ENCODE measurements at regions of chr2 and their contacts with region 1.

Region 1: GRCh38 chr2:99559075-99559662 is 69.4 kb upstream of the REV1 start:
- DNase-seq: peak; percentile 88 to 97
- ATAC-seq: peak; percentile 96
- H3K4me3 ChIP-seq: no peak overlapping the region
- H3K27ac ChIP-seq: no peak overlapping the region
- H3K4me1 ChIP-seq: no peaks in the 10 kb centered on the region
- H3K27me3 ChIP-seq: no peaks in the 10 kb centered on the region

Region 2: GRCh38 chr2:100013892-100014677 is 454.9 kb after region 1 on chr2:
- intact Hi-C with region 1: no loop called
- DNase-seq: peak; percentile 65 to 80
- ATAC-seq: peak; percentile 27
- H3K4me3 ChIP-seq: no peak overlapping the region
- H3K27ac ChIP-seq: no peak overlapping the region
- H3K4me1 ChIP-seq: no peaks in the 10 kb centered on the region
- H3K27me3 ChIP-seq: no peaks in the 10 kb centered on the region

Region 3: GRCh38 chr2:100242891-100243619 is 683.9 kb after region 1 on chr2:
- intact Hi-C with region 1: loop called (anchors 1 to 5 kb)
- DNase-seq: peak; percentile 78 to 89
- ATAC-seq: peak; percentile 68
- H3K4me3 ChIP-seq: no peak overlapping the region
- H3K27ac ChIP-seq: no peak overlapping the region
- H3K4me1 ChIP-seq: no peaks in the 10 kb centered on the region
- H3K27me3 ChIP-seq: no peaks in the 10 kb centered on the region

Region 4: GRCh38 chr2:100262555-100263320 is 703.6 kb after region 1 on chr2:
- intact Hi-C with region 1: loop called (anchors 1 to 2 kb)
- DNase-seq: peak; percentile 70 to 91
- ATAC-seq: peak; percentile 83
- H3K4me3 ChIP-seq: no peak overlapping the region
- H3K27ac ChIP-seq: no peak overlapping the region
- H3K4me1 ChIP-seq: no peaks in the 10 kb centered on the region
- H3K27me3 ChIP-seq: no peaks in the 10 kb centered on the region

Region 5: DNA sequence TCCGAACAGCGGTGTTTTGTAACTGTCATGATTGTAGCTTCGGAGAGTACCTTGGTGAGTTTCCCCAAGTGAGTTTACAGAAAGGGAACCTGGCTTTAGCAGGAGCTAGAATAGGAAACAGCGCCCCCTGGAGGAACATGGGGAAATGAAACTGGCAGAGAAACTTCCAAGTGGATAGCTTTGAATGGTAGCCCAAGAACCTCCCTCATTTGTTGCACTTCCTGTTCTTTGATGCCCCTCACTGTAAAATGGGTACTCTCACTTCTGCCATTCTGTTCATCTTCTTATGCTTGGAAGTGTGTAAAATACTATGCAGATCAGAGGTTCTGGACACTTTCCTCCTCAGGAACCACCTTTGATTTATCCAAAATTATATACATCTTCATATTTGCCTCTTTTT is 822.1 kb after region 1 on chr2:
- intact Hi-C with region 1: loop called (anchors 5 to 10 kb)
- DNase-seq: peak; percentile 87 to 88
- ATAC-seq: peak; percentile 59
- H3K4me3 ChIP-seq: no peak overlapping the region
- H3K27ac ChIP-seq: no peak overlapping the region
- H3K4me1 ChIP-seq: no peaks in the 10 kb centered on the region
- H3K27me3 ChIP-seq: no peaks in the 10 kb centered on the region